ENCODE measurements at regions of chr22 and their contacts with region 1.

Region 1: GRCh38 chr22:23539135-23539838 is 40.8 kb downstream of the IGLL1 start:
- DNase-seq: peak; percentile 89
- H3K4me3 ChIP-seq: peak overlapping the region in 1 of 4 donors; percentile 2
- H3K27ac ChIP-seq: peak overlapping the region in 1 of 4 donors; percentile 31
- H3K4me1 ChIP-seq: peaks cover 0 to 7% (median 0%) of the 10 kb centered on the region in 4 donors
- H3K27me3 ChIP-seq: no peaks in the 10 kb centered on the region
- CTCF ChIP-seq: peak; percentile 83 to 98 (median 96)
- EP300 ChIP-seq: no peak
- POLR2A ChIP-seq: no peak

Region 2: DNA sequence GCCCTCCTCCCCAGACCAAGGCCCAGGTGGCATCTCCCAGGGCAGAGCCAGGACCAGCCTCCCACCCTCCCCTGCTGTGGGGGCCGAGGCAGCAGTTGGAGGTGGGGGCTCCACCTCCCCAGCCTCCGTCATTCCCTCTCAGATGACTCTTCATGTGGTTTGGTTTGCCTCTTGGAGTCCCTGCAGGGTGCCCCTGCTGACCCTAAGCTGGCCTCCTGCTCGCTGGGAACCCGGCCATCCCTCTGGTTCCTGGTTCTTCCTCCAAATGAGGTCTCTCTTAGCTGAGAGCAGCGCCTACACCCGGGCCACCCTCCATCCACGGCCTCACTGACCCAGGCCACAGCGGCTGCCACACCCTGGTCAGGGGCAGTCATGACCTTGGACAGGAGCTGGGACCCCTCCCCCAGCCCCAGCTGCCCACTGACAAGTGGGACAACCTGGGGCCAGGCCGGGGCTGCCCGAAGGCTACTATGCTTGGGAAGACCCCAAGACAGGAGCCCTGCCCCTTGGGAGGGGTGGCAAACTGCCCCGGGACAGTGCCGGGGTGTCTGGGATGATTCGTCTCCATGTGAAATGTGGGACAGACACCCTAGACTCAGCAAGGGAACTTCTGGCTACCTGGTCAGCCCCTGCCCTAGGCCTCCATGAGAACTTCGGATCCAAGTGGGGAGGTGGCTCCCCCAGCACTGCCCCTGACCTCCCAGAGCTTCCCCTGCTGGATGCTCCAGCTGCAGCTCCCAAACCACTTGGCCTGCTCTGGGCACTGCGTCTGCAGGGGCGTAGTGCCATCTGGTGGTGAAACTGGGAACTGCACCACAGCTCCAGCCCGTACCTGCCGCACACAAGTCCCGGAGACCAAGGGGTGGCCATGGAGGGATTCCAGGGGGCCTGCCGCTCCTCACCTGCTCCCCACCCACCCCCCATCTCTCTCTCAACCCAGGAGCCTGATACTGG is 153.7 kb before region 1 on chr22:
- intact Hi-C with region 1: loop called (anchors 5 kb)
- DNase-seq: peak; percentile 87
- H3K4me3 ChIP-seq: no peak overlapping the region
- H3K27ac ChIP-seq: no peak overlapping the region
- H3K4me1 ChIP-seq: peaks cover 0 to 8% (median 0%) of the 10 kb centered on the region in 4 donors
- H3K27me3 ChIP-seq: peaks cover 0 to 5% (median 0%) of the 10 kb centered on the region in 3 donors
- CTCF ChIP-seq: peak; percentile 88 to 99 (median 98)
- EP300 ChIP-seq: no peak
- POLR2A ChIP-seq: no peak

Region 3: GRCh38 chr22:23431337-23432072 is 107.8 kb before region 1 on chr22:
- intact Hi-C with region 1: loop called (anchors 10 kb)
- DNase-seq: no peak
- H3K4me3 ChIP-seq: no peak overlapping the region
- H3K27ac ChIP-seq: no peak overlapping the region
- H3K4me1 ChIP-seq: peaks cover 0 to 7% (median 2%) of the 10 kb centered on the region in 4 donors
- H3K27me3 ChIP-seq: peaks cover 0 to 4% (median 0%) of the 10 kb centered on the region in 3 donors
- CTCF ChIP-seq: no peak
- EP300 ChIP-seq: no peak
- POLR2A ChIP-seq: no peak

Region 4: GRCh38 chr22:23767673-23768548 is 228.6 kb after region 1 on chr22 and contains the start of gene CHCHD10:
- intact Hi-C with region 1: loop called (anchors 5 kb)
- DNase-seq: peak; percentile 92
- H3K4me3 ChIP-seq: peak within 1 kb of the TSS; percentile 57 to 75 (median 66)
- H3K27ac ChIP-seq: peak within 1 kb of the TSS; percentile 85 to 89 (median 88)
- H3K4me1 ChIP-seq: peaks cover 0 to 84% (median 60%) of the 10 kb centered on the region in 4 donors
- H3K27me3 ChIP-seq: no peaks in the 10 kb centered on the region
- CTCF ChIP-seq: peak; percentile 73 to 92 (median 79)
- EP300 ChIP-seq: no peak
- POLR2A ChIP-seq: peak; percentile 18 to 65
- total RNA-seq, gene CHCHD10: 5.7 to 51.5 (median 29.1) TPM

Measured in sigmoid colon (tissue), 7 donors.